ENCODE measurements at regions of chr4 and their contacts with region 1.

Region 1: DNA sequence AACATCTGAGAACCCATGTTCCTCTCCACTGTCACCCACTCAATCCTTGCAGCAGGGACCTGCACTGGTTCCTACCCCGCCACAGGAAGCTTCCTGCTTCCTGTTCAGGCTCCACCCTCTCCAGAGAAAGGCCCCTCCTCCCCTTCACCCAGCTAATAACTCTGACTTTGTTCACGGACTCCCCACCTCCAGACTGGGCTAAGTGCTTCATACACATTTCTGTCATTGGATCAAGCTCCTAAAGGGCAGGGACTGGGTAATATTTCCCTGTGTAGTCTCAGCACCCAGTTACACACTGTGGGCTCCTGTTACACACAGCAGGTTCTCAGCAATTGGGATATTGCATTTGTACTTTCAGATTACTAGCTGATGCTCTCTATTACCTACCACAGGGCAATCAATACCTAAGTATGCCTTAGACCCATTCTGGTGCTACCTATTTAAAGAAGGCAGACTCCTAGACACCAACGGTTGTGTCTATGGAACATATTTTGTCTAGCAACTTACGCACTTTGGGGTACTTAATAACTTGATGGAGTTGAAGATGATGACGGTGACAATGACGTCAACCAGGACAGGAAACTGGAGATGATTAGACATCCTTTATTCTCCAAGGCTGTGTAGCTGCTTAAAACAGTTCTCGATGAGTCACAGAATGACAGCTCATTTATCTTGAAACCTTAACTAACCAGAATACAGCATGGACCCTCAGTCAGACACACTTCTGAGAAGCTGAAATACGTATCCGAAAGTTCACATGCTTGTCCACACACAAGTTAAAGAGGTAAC is 58.1 kb downstream of the MAML3 start:
- DNase-seq: peak in 19 of 42 donors; percentile 8 to 61 (median 34)

Region 2: DNA sequence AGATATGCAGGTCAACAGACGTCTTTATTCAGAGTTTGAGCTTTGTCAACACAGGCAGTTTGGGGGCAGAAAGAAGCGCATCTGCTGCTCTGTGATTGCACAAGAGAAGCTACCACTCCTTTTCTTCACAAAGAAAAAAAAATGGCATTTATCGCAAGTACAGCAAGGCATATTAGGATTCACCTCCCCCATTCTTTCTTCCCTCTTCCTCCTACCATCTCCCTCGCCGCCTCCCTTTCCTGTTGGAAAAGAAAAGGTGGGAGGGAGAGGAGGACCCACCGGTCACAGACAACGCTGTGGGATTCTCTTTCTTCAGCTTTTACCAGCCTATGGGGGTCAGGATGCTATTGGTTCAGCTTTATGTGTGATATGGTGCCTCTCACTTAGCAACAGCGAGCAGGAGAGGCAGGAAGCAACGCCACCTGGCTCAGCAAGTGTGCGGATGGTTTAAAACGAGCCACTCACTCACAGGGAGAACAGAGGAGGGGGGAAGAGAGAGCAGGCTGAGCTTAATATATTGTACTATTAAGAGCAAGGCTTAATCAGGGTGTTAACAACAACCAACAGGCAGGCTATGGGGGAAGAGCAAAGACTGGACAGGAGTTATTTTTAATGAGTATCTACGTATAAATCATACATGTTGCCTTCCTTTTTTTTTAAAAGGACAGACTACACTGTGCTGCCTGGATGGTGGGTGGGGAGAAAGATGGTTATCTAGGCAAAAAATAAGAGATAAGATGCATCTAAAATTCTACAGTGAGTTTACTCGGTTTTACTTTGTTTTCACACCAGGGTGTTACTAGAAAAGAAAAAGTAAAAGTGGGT is 46.7 kb before region 1 on chr4:
- intact Hi-C with region 1: loop called (anchors 10 kb)
- DNase-seq: peak; percentile 21 to 86 (median 59)

Measured in head of caudate nucleus (tissue), 42 donors.